Activated CD8-positive, alpha-beta T cell treated with anti-CD3 and anti-CD28 coated beads for 36 hours (primary cell): ENCODE measurements at regions of chr2 and their contacts with region 1.

Region 1: GRCh38 chr2:66581339-66582103 is 146.6 kb downstream of the MEIS1 start:
- DNase-seq: no peak
- ATAC-seq: no peak
- H3K4me3 Mint-ChIP-seq: no peak overlapping the region
- H3K27ac Mint-ChIP-seq: no peak overlapping the region
- H3K4me1 Mint-ChIP-seq: peaks cover 5% of the 10 kb centered on the region
- H3K27me3 Mint-ChIP-seq: peaks cover 41% of the 10 kb centered on the region
- CTCF ChIP-seq: no peak

Region 2: GRCh38 chr2:66434679-66435548 is 146.6 kb before region 1 on chr2 and contains the start of gene MEIS1:
- CTCF ChIA-PET with region 1: interaction called, 3 read pairs
- POLR2A ChIA-PET with region 1: no interaction called
- intact Hi-C with region 1: loop called (anchors 2 kb)
- DNase-seq: peak; percentile 55
- ATAC-seq: peak; percentile 64
- H3K4me3 Mint-ChIP-seq: peak within 1 kb of the TSS; percentile 59
- H3K27ac Mint-ChIP-seq: no peak within 1 kb of the TSS
- H3K4me1 Mint-ChIP-seq: peaks cover 21% of the 10 kb centered on the region
- H3K27me3 Mint-ChIP-seq: peaks cover 77% of the 10 kb centered on the region
- CTCF ChIP-seq: no peak
- total RNA-seq, gene MEIS1: not detected

Region 3: GRCh38 chr2:66526180-66526579 is 55.3 kb before region 1 on chr2:
- CTCF ChIA-PET with region 1: no interaction called
- POLR2A ChIA-PET with region 1: no interaction called
- intact Hi-C with region 1: no loop called
- DNase-seq: no peak
- ATAC-seq: no peak
- H3K4me3 Mint-ChIP-seq: no peak overlapping the region
- H3K27ac Mint-ChIP-seq: no peak overlapping the region
- H3K4me1 Mint-ChIP-seq: no peaks in the 10 kb centered on the region
- H3K27me3 Mint-ChIP-seq: peaks cover 3% of the 10 kb centered on the region
- CTCF ChIP-seq: no peak